ENCODE measurements at regions of chr19 and their contacts with region 1.

Region 1: GRCh38 chr19:33795370-33796163 is 1.1 kb upstream of the KCTD15 start:
- DNase-seq: peak; percentile 89
- H3K4me3 Mint-ChIP-seq: peak overlapping the region; percentile 77
- H3K27ac Mint-ChIP-seq: peak overlapping the region; percentile 75
- H3K4me1 Mint-ChIP-seq: no peaks in the 10 kb centered on the region
- H3K27me3 Mint-ChIP-seq: no peaks in the 10 kb centered on the region
- CTCF ChIP-seq: peak; percentile 91

Region 2: DNA sequence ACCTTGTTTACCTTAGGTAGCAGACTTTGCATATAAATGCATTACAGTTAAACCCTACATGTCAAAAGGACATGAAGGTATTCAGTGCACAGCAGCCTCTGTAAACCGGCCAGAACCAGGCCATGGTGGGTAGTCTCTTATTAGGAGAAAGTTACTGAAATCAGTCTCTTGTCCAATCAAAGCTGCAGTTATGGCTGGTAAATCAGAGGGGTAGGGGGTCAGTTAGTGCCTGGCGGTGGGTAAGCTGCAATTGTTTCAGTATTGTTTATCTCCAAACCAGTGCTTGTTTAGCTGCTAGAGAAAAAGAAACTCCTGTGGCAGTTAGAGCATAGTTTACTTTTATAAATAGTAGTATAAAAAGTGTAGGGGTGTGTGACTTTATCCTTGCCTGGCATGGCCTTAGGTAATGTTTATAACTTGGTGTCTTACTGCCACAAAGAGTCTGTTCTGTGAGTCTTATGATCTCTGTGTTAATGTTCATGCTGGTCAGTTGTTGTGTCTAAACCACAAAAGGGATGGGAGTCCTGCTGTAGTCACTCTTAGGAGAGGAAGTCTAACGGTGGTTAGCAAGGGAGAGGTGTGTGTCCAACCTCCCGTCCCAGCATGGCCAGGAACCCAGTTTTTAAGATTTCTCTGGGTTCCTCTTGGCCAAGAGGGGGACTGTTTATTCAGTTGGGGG is 145.8 kb before region 1 on chr19:
- CTCF ChIA-PET with region 1: no interaction called
- POLR2A ChIA-PET with region 1: no interaction called
- intact Hi-C with region 1: no loop called
- DNase-seq: no peak
- H3K4me3 Mint-ChIP-seq: no peak overlapping the region
- H3K27ac Mint-ChIP-seq: no peak overlapping the region
- H3K4me1 Mint-ChIP-seq: no peaks in the 10 kb centered on the region
- H3K27me3 Mint-ChIP-seq: no peaks in the 10 kb centered on the region
- CTCF ChIP-seq: no peak

Region 3: DNA sequence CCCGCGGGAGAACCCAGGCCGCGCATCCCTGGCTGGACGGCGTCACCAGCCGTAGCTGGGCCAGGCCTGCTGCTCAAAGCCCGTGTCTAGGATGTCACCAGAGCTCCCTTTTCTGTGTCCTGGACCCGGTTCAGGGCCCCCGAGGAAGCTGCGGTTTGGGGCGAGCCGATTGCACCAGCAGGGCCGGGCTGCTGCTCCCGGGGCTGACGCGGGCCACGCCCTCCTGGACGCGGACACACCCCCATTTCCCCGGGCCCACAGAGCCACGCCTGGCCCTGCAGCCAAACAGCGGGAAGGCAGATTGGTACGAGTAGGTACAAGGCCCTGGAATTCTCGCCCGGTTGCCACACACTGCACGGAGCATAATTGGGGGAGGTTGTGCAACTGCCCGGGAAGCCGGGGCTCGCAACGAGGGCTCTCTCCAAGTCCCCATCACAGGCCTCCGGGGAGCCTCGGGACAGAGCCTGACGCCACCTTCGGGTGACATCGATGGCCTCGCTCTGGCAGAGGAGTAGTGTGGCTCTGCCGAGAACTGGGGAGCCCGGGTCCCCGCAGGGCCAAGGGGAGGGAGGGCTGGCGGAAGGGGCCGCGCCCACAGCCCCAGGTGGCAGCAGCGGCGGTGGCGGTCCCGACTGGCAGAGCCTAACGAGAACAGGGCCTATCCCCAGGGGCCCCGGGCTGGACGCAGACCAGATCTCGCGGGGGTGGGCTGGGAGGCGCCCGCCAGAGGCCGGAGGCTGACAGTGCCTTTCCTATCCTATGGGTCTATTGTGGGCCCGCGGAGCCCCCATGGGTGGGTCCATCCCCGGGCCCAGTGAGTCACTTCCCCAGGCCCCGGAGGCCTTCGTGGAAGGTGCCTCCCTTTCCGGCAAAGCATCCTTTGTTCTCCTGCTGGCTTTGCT is 24.6 kb after region 1 on chr19:
- CTCF ChIA-PET with region 1: interaction called, 18 read pairs
- POLR2A ChIA-PET with region 1: interaction called, 47 read pairs
- intact Hi-C with region 1: loop called (anchors 1 kb)
- DNase-seq: peak; percentile 99
- H3K4me3 Mint-ChIP-seq: peak overlapping the region; percentile 70
- H3K27ac Mint-ChIP-seq: peak overlapping the region; percentile 35
- H3K4me1 Mint-ChIP-seq: peaks cover 8% of the 10 kb centered on the region
- H3K27me3 Mint-ChIP-seq: no peaks in the 10 kb centered on the region
- CTCF ChIP-seq: no peak

Region 4: GRCh38 chr19:33868788-33869412 is 73.3 kb after region 1 on chr19:
- CTCF ChIA-PET with region 1: interaction called, 21 read pairs
- POLR2A ChIA-PET with region 1: interaction called, 7 read pairs
- intact Hi-C with region 1: no loop called
- DNase-seq: peak; percentile 13
- H3K4me3 Mint-ChIP-seq: no peak overlapping the region
- H3K27ac Mint-ChIP-seq: no peak overlapping the region
- H3K4me1 Mint-ChIP-seq: no peaks in the 10 kb centered on the region
- H3K27me3 Mint-ChIP-seq: no peaks in the 10 kb centered on the region
- CTCF ChIP-seq: no peak

Region 5: DNA sequence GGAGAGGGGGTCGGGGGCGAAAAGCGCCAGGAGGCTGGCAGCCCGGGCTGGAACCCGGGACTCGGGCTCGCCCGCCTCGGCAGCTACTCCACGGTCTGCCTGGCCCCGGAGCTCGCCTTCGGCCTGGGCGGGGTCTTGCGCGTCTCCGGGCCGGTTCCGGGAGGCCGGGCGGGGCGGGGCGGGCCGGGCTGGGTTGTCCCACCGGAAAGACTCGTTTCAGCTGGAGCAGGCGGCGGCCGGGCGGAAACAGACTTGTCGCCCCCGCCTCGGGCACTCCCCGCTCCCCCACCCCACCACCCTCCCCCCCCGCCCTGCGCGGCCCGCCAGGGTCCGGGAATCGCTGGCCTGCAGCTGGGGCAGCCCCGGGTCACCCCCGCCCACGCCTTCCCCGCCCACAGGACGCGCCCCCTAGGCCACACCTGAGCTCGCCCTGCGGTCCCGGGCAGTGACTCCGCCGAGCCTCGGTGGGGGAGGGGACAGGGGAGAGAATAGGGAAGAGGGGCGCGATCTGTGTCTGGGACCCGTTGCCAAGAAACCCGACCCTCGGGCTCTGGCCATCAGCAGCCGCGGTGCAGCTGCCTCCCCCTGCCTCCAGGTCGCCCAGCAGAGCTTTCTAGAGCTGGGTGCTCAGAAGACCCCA is 110.5 kb after region 1 on chr19:
- CTCF ChIA-PET with region 1: interaction called, 4 read pairs
- POLR2A ChIA-PET with region 1: interaction called, 3 read pairs
- intact Hi-C with region 1: loop called (anchors 10 kb)
- DNase-seq: peak; percentile 35
- H3K4me3 Mint-ChIP-seq: peak overlapping the region; percentile 64
- H3K27ac Mint-ChIP-seq: no peak overlapping the region
- H3K4me1 Mint-ChIP-seq: no peaks in the 10 kb centered on the region
- H3K27me3 Mint-ChIP-seq: no peaks in the 10 kb centered on the region
- CTCF ChIP-seq: no peak

Measured in MCF 10A (cell line).